PC-9 (cell line): ENCODE measurements at regions of chr20 and their contacts with region 1.

Region 1: DNA sequence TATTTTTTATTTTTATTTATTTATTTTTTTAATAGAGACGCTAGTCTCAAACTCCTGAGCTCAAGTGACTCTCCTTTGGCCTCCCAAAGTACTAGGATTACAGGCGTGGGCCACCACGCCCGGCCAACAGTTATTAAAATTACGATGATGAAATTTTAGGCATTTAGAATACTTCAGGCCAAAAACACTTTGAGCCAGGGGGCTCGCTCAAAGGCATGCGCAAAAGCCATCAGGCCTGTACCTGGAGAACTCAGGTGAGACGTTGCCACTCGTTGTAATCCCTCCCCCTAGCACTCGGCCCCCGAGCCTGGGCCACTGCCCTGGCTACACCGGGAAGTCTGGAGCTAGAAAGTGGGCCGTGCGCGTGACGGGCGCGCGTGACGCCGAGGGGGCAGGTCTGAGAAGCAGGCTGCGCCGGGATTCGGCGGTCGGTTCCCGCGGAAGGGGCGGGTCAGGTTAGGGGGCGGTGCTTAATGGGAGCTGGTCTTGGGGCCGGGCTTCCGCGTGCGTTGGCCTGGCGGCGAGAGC is 337 bp upstream of the CBFA2T2 start:
- DNase-seq: peak; percentile 91 to 100
- H3K4me3 ChIP-seq: peak overlapping the region; percentile 55; the same call in 1 of the 2 replicates
- H3K27ac ChIP-seq: peak overlapping the region; percentile 90
- H3K4me1 ChIP-seq: peaks cover 18% of the 10 kb centered on the region
- H3K27me3 ChIP-seq: no peaks in the 10 kb centered on the region
- CTCF ChIP-seq: no peak

Region 2: GRCh38 chr20:33503564-33503963 is 14.0 kb after region 1 on chr20:
- CTCF ChIA-PET with region 1: no interaction called
- POLR2A ChIA-PET with region 1: interaction called, 24 read pairs
- intact Hi-C with region 1: no loop called
- DNase-seq: no peak
- H3K4me3 ChIP-seq: no peak overlapping the region
- H3K27ac ChIP-seq: no peak overlapping the region
- H3K4me1 ChIP-seq: no peaks in the 10 kb centered on the region
- H3K27me3 ChIP-seq: no peaks in the 10 kb centered on the region
- CTCF ChIP-seq: no peak

Region 3: GRCh38 chr20:33515569-33516216 is 26.1 kb after region 1 on chr20:
- CTCF ChIA-PET with region 1: interaction called, 11 read pairs
- POLR2A ChIA-PET with region 1: interaction called, 6 read pairs
- intact Hi-C with region 1: no loop called
- DNase-seq: no peak
- H3K4me3 ChIP-seq: no peak overlapping the region
- H3K27ac ChIP-seq: no peak overlapping the region
- H3K4me1 ChIP-seq: peaks cover 16% of the 10 kb centered on the region
- H3K27me3 ChIP-seq: no peaks in the 10 kb centered on the region
- CTCF ChIP-seq: peak; percentile 51; the same call in 1 of the 2 replicates